CD8-positive, alpha-beta T cell (primary cell): ENCODE measurements at regions of chr12 and their contacts with region 1.

Region 1: GRCh38 chr12:14920475-14921126 is 17.7 kb downstream of the ERP27 start:
- DNase-seq: peak in 2 of 9 experiments; percentile 32 to 40
- ATAC-seq: peak; percentile 65
- H3K4me3 ChIP-seq: no peak overlapping the region
- H3K4me3 Mint-ChIP-seq: peak overlapping the region; percentile 30
- H3K27ac ChIP-seq: peak overlapping the region in 1 of 2 experiments; percentile 36
- H3K27ac Mint-ChIP-seq: peak overlapping the region; percentile 83
- H3K4me1 ChIP-seq: peaks cover 23% of the 10 kb centered on the region
- H3K4me1 Mint-ChIP-seq: peaks cover 30% of the 10 kb centered on the region
- H3K27me3 ChIP-seq: no peaks in the 10 kb centered on the region
- H3K27me3 Mint-ChIP-seq: no peaks in the 10 kb centered on the region
- CTCF ChIP-seq: no peak

Region 2: GRCh38 chr12:14854586-14855183 is 65.9 kb before region 1 on chr12:
- CTCF ChIA-PET with region 1: no interaction called
- POLR2A ChIA-PET with region 1: no interaction called
- intact Hi-C with region 1: loop called in 1 of 2 experiments (anchors 1 kb)
- DNase-seq: no peak
- ATAC-seq: no peak
- H3K4me3 ChIP-seq: no peak overlapping the region
- H3K4me3 Mint-ChIP-seq: no peak overlapping the region
- H3K27ac ChIP-seq: no peak overlapping the region
- H3K27ac Mint-ChIP-seq: no peak overlapping the region
- H3K4me1 ChIP-seq: no peaks in the 10 kb centered on the region
- H3K4me1 Mint-ChIP-seq: no peaks in the 10 kb centered on the region
- H3K27me3 ChIP-seq: no peaks in the 10 kb centered on the region
- H3K27me3 Mint-ChIP-seq: no peaks in the 10 kb centered on the region
- CTCF ChIP-seq: no peak

Region 3: DNA sequence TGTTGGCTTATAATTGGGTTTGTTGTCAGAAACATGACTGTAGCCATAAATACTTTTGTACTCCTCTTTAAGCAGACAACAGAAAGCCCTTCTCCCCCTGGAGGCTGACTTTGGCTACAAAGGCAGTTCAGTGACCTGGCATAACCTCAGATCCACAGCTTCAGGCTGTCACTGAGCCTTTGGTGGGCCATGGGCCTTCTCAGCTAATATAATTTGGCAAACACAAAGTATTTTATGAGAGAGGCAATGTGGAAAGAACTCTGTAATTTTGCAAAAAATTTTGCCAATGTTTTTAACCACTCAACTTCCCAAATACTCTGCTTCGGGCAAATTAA is 19.4 kb before region 1 on chr12:
- CTCF ChIA-PET with region 1: no interaction called
- POLR2A ChIA-PET with region 1: no interaction called
- intact Hi-C with region 1: no loop called
- DNase-seq: peak in 1 of 9 experiments; percentile 17
- ATAC-seq: no peak
- H3K4me3 ChIP-seq: no peak overlapping the region
- H3K4me3 Mint-ChIP-seq: no peak overlapping the region
- H3K27ac ChIP-seq: no peak overlapping the region
- H3K27ac Mint-ChIP-seq: no peak overlapping the region
- H3K4me1 ChIP-seq: no peaks in the 10 kb centered on the region
- H3K4me1 Mint-ChIP-seq: peaks cover 16% of the 10 kb centered on the region
- H3K27me3 ChIP-seq: no peaks in the 10 kb centered on the region
- H3K27me3 Mint-ChIP-seq: no peaks in the 10 kb centered on the region
- CTCF ChIP-seq: no peak